Esophagus muscularis mucosa (tissue), 4 donors: ENCODE measurements at regions of chr13 and their contacts with region 1.

Region 1: GRCh38 chr13:30114571-30115256 is 192.6 kb downstream of the KATNAL1 start:
- DNase-seq: peak; percentile 95
- H3K4me3 ChIP-seq: peak overlapping the region; percentile 67 to 78 (median 72)
- H3K27ac ChIP-seq: peak overlapping the region; percentile 31 to 73 (median 59)
- H3K4me1 ChIP-seq: peaks cover 22 to 53% (median 48%) of the 10 kb centered on the region in 4 donors
- H3K27me3 ChIP-seq: no peaks in the 10 kb centered on the region
- CTCF ChIP-seq: peak; percentile 89 to 97 (median 92)
- EP300 ChIP-seq: no peak
- POLR2A ChIP-seq: no peak

Region 2: DNA sequence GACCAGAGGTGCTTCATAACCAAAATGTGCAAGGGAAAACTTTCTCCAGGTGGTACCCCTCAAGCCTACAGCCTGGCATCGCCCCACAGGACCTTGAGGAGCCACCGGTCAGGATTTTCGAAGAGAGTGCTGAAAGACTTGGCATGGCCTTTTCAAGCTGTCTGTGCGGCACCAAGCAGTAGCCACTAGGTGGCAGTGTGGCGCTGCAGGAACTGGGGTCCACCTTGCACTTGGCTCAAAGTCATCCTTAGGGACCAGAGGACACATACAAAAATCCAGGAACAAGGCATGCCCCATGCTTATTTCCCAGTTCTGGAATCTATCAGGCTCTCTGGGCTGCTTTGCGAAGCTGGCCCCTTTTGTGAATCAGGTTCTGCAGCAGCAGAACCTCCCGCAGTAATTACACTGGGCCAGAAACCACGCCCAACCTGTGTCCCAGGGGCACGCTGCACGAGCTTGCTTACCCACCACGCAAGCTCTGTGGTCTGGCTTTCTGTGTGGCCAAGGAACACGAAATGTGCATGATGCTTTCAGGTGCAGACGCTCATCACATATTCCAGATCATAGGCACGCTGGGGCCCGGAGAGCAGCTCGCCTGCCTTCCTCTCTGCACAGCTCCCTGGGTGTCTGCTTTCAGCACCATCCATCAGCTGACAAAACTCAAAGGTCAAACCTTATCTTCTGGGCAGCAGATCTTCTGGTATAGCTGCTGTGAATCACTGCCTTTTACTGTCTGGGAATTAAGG is 606.4 kb before region 1 on chr13:
- intact Hi-C with region 1: loop called (anchors 2 kb)
- DNase-seq: peak; percentile 94
- H3K4me3 ChIP-seq: no peak overlapping the region
- H3K27ac ChIP-seq: peak overlapping the region in 3 of 4 donors; percentile 31 to 61 (median 36)
- H3K4me1 ChIP-seq: peaks cover 9 to 38% (median 36%) of the 10 kb centered on the region in 4 donors
- H3K27me3 ChIP-seq: peaks cover 0 to 22% (median 0%) of the 10 kb centered on the region in 4 donors
- CTCF ChIP-seq: peak; percentile 87 to 99 (median 93)
- EP300 ChIP-seq: no peak
- POLR2A ChIP-seq: no peak

Region 3: GRCh38 chr13:29595380-29596063 is 519.2 kb before region 1 on chr13 and contains the start of gene SLC7A1:
- intact Hi-C with region 1: loop called (anchors 10 kb)
- DNase-seq: peak; percentile 93
- H3K4me3 ChIP-seq: peak within 1 kb of the TSS; percentile 91 to 99 (median 95)
- H3K27ac ChIP-seq: peak within 1 kb of the TSS; percentile 94 to 98 (median 96)
- H3K4me1 ChIP-seq: peaks cover 0 to 41% (median 30%) of the 10 kb centered on the region in 4 donors
- H3K27me3 ChIP-seq: peaks cover 0 to 6% (median 0%) of the 10 kb centered on the region in 4 donors
- CTCF ChIP-seq: no peak
- EP300 ChIP-seq: no peak
- POLR2A ChIP-seq: no peak
- total RNA-seq, gene SLC7A1: 15.0 to 28.8 (median 21.6) TPM

Region 4: DNA sequence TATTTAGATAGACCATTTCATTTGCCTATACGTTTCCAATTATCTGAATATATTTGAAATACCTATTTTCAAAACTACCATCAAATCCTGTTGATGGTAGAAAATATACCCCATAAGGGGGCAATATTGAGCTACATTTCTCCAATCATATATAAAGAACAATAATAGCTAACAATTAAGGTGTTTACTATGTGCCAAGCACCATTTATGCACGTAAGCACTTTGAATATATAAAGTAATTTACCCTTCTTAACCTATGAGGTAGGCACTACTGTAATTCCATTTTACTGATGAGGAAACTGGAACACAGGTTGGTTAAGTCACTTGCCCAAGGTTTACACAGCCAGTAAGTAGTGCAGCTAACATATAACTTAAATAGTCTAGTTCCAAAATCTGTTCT is 343.5 kb before region 1 on chr13:
- intact Hi-C with region 1: loop called (anchors 2 kb)
- DNase-seq: no peak
- H3K4me3 ChIP-seq: no peak overlapping the region
- H3K27ac ChIP-seq: no peak overlapping the region
- H3K4me1 ChIP-seq: peaks cover 0 to 16% (median 6%) of the 10 kb centered on the region in 4 donors
- H3K27me3 ChIP-seq: no peaks in the 10 kb centered on the region
- CTCF ChIP-seq: peak; percentile 42 to 56 (median 49)
- EP300 ChIP-seq: no peak
- POLR2A ChIP-seq: no peak

Region 5: GRCh38 chr13:29923554-29924481 is 190.9 kb before region 1 on chr13:
- intact Hi-C with region 1: loop called (anchors 5 kb)
- DNase-seq: no peak
- H3K4me3 ChIP-seq: peak overlapping the region in 1 of 4 donors; percentile 9
- H3K27ac ChIP-seq: peak overlapping the region; percentile 76 to 92 (median 82)
- H3K4me1 ChIP-seq: peaks cover 27 to 57% (median 48%) of the 10 kb centered on the region in 4 donors
- H3K27me3 ChIP-seq: no peaks in the 10 kb centered on the region
- CTCF ChIP-seq: peak; percentile 62 to 69 (median 66)
- EP300 ChIP-seq: no peak
- POLR2A ChIP-seq: no peak